ENCODE measurements at regions of chr10 and their contacts with region 1.

Region 1: DNA sequence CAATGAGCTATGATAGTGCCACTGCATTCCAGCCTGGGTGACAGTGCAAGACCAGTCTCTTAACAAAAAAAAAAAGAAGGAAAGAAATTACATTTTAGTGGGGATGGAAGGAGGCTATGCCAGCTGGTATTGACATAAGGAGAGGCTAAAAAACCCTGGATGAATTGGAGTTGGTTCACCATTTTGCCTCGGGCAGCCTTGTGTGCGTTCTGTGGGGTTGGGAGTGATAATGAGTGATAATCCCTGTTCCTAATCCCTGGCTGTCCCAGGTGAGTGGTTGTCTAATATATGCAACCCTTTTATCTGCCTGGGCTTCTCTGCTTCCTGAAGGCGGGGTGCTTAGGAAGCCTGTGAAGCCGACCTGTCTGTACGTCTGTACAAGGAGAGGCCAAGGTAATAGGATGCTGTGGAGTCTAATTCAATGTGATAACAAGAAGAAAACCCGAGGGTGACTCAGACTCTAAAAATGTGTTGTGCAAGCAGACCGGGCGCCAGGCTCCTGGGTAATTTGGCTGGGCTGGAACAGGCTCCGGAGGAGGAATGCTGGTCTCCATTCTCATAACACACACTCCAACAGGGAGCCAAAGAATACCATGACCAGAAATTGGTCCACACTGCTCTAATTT is 43.5 kb downstream of the THNSL1 start:
- DNase-seq: peak; percentile 94
- H3K4me3 Mint-ChIP-seq: peak overlapping the region; percentile 53
- H3K27ac Mint-ChIP-seq: peak overlapping the region; percentile 78
- H3K4me1 Mint-ChIP-seq: peaks cover 35% of the 10 kb centered on the region
- H3K27me3 Mint-ChIP-seq: no peaks in the 10 kb centered on the region
- CTCF ChIP-seq: no peak

Region 2: DNA sequence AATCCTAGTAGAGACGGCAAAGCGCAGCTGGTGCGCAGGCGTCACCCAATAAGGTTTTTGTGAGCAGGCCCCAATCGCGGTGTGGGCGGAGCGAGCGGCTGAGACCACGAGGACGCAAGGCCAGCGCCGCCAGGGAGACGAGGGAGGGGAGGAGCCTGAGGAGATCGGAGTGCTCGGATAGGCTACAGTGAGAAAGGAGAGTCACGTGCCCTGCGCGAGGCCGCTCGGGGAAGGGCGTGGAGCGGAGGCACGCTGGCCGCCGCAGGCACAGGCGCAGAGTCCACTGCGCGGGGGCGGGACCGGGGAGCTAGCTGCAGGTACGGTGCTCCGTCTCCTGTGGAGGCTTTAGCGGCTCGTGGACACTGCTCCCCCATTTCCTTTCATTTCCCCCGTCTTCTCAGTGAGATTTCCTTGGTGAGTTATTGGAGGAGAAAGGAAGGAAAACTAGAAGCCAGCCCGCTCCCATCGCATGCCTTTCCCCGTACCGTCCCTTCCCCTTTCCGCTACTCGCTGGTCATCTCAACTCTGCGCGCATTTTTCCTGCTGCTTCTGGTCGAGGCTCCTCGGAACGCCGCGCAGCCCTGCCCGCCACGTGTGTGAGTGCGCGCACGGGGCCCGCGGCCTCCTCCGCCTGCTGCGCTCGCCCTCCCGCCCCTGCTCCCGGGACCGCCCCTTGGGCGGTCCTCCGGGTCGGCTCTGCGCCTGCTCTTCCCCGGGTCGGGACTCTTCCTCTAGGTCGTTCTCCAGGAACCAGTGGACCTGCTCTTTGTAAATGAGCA is 43.3 kb before region 1 on chr10 and contains the start of gene THNSL1:
- CTCF ChIA-PET with region 1: interaction called, 3 read pairs
- POLR2A ChIA-PET with region 1: interaction called, 15 read pairs
- intact Hi-C with region 1: loop called (anchors 1 kb)
- DNase-seq: peak; percentile 99
- H3K4me3 Mint-ChIP-seq: peak within 1 kb of the TSS; percentile 80
- H3K27ac Mint-ChIP-seq: peak within 1 kb of the TSS; percentile 92
- H3K4me1 Mint-ChIP-seq: no peaks in the 10 kb centered on the region
- H3K27me3 Mint-ChIP-seq: no peaks in the 10 kb centered on the region
- CTCF ChIP-seq: no peak
- total RNA-seq, gene THNSL1: 7.6 and 7.9 TPM in 2 replicates

Measured in MCF 10A (cell line).